Activated CD4-positive, alpha-beta T cell treated with anti-CD3 and anti-CD28 coated beads, Interleukin-2, amount 10 ng/mL, durations not matched to agents 7 days and 5 days (primary cell): ENCODE measurements at regions of chr14 and their contacts with region 1.

Region 1: GRCh38 chr14:59576332-59577294 is at the start of gene CCDC175:
- DNase-seq: peak; percentile 84
- H3K4me3 Mint-ChIP-seq: peak within 1 kb of the TSS; percentile 52
- H3K27ac Mint-ChIP-seq: no peak within 1 kb of the TSS
- H3K4me1 Mint-ChIP-seq: peaks cover 5% of the 10 kb centered on the region
- H3K27me3 Mint-ChIP-seq: peaks cover 19% of the 10 kb centered on the region
- total RNA-seq, gene CCDC175: not detected

Region 2: GRCh38 chr14:59507063-59507780 is 69.4 kb before region 1 on chr14:
- CTCF ChIA-PET with region 1: interaction called, 11 read pairs
- POLR2A ChIA-PET with region 1: no interaction called
- DNase-seq: peak; percentile 63
- H3K4me3 Mint-ChIP-seq: no peak overlapping the region
- H3K27ac Mint-ChIP-seq: no peak overlapping the region
- H3K4me1 Mint-ChIP-seq: peaks cover 8% of the 10 kb centered on the region
- H3K27me3 Mint-ChIP-seq: peaks cover 8% of the 10 kb centered on the region

Region 3: GRCh38 chr14:59664741-59665140 is 88.1 kb after region 1 on chr14:
- CTCF ChIA-PET with region 1: no interaction called
- POLR2A ChIA-PET with region 1: no interaction called
- DNase-seq: no peak
- H3K4me3 Mint-ChIP-seq: no peak overlapping the region
- H3K27ac Mint-ChIP-seq: no peak overlapping the region
- H3K4me1 Mint-ChIP-seq: no peaks in the 10 kb centered on the region
- H3K27me3 Mint-ChIP-seq: no peaks in the 10 kb centered on the region